ENCODE measurements at regions of chr16 and their contacts with region 1.

Region 1: GRCh38 chr16:75110637-75111513 is 5.7 kb downstream of the LDHD start:
- DNase-seq: peak; percentile 88 to 94 (median 91)
- ATAC-seq: peak; percentile 39 to 65 (median 58)
- H3K4me3 ChIP-seq: peak overlapping the region in 9 of 12 donors; percentile 11 to 43 (median 34)
- H3K27ac ChIP-seq: peak overlapping the region in 11 of 12 donors; percentile 77 to 98 (median 91)
- H3K4me1 ChIP-seq: peaks cover 6 to 92% (median 56%) of the 10 kb centered on the region in 12 donors
- H3K27me3 ChIP-seq: peaks cover 0 to 8% (median 0%) of the 10 kb centered on the region in 9 donors
- CTCF ChIP-seq: peak; percentile 85 to 97 (median 93)
- POLR2A ChIP-seq: no peak

Region 2: GRCh38 chr16:74718741-74719610 is 391.9 kb before region 1 on chr16:
- intact Hi-C with region 1: loop called in 1 of 10 experiments (anchors 10 kb)
- DNase-seq: no peak
- ATAC-seq: no peak
- H3K4me3 ChIP-seq: no peak overlapping the region
- H3K27ac ChIP-seq: no peak overlapping the region
- H3K4me1 ChIP-seq: no peaks in the 10 kb centered on the region
- H3K27me3 ChIP-seq: no peaks in the 10 kb centered on the region
- CTCF ChIP-seq: no peak
- POLR2A ChIP-seq: no peak

Region 3: GRCh38 chr16:74888208-74888852 is 222.5 kb before region 1 on chr16:
- intact Hi-C with region 1: loop called in 1 of 10 experiments (anchors 10 kb)
- DNase-seq: no peak
- ATAC-seq: no peak
- H3K4me3 ChIP-seq: no peak overlapping the region
- H3K27ac ChIP-seq: no peak overlapping the region
- H3K4me1 ChIP-seq: no peaks in the 10 kb centered on the region
- H3K27me3 ChIP-seq: no peaks in the 10 kb centered on the region
- CTCF ChIP-seq: no peak
- POLR2A ChIP-seq: no peak

Region 4: DNA sequence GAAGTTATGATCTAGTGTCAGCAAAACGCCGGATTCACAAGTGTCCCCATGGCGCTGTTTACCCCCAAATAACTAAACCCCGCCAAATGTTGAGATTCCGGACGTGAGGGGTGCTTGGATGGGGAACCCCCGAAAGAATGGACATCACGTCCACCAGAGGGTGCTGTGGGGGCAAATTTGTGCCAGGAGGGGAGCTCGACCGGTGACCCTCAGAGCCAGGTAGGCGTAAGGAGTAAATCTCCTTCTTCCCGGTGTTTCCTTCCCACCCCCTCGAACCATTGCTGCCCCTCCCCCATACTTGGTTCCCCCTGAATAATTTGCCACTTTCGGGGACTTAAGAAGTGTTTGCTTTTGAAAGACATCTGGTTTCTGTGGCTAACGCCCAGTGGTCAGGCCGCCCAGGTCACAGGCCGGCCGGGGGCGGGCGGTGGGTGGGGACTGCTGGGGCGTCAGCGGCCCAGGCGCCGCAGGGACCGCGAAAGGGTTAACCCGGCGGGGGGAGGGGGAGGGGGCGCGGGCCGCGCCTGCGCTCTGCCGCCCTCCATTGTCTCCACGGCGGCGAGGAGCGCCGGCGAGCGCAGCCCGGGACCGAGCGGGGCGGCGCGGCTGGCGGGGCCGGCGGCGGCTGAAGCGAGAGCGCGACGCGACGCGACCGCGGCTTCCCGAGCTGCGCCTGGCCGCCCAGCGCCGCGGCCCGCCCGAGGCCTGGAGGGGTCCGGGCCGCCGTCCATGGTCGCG is 112.2 kb before region 1 on chr16 and contains the start of gene ZNRF1:
- intact Hi-C with region 1: loop called (anchors 1 to 2 kb)
- DNase-seq: peak; percentile 87 to 94 (median 89)
- ATAC-seq: peak; percentile 74 to 89 (median 87)
- H3K4me3 ChIP-seq: peak within 1 kb of the TSS; percentile 65 to 99 (median 94)
- H3K27ac ChIP-seq: peak within 1 kb of the TSS; percentile 16 to 93 (median 88)
- H3K4me1 ChIP-seq: peaks cover 3 to 49% (median 33%) of the 10 kb centered on the region in 12 donors
- H3K27me3 ChIP-seq: no peaks in the 10 kb centered on the region
- CTCF ChIP-seq: peak; percentile 63 to 87 (median 82)
- POLR2A ChIP-seq: no peak
- total RNA-seq, gene ZNRF1: 20.5 to 43.3 (median 23.9) TPM

Region 5: GRCh38 chr16:75064403-75065148 is 46.3 kb before region 1 on chr16:
- intact Hi-C with region 1: loop called in 1 of 10 experiments (anchors 5 kb)
- DNase-seq: no peak
- ATAC-seq: no peak
- H3K4me3 ChIP-seq: peak overlapping the region in 1 of 12 donors; percentile 23
- H3K27ac ChIP-seq: peak overlapping the region in 2 of 12 donors; percentile 11 to 15
- H3K4me1 ChIP-seq: peaks cover 0 to 51% (median 24%) of the 10 kb centered on the region in 12 donors
- H3K27me3 ChIP-seq: no peaks in the 10 kb centered on the region
- CTCF ChIP-seq: no peak
- POLR2A ChIP-seq: no peak

Region 6: GRCh38 chr16:75148311-75149195 is 37.7 kb after region 1 on chr16 and contains the start of gene ZFP1:
- intact Hi-C with region 1: loop called in 1 of 10 experiments (anchors 2 kb)
- DNase-seq: peak; percentile 96 to 98 (median 96)
- ATAC-seq: peak; percentile 98 to 99 (median 98)
- H3K4me3 ChIP-seq: peak within 1 kb of the TSS; percentile 75 to 100 (median 88)
- H3K27ac ChIP-seq: peak within 1 kb of the TSS; percentile 83 to 100 (median 98)
- H3K4me1 ChIP-seq: peaks cover 0 to 11% (median 5%) of the 10 kb centered on the region in 12 donors
- H3K27me3 ChIP-seq: no peaks in the 10 kb centered on the region
- CTCF ChIP-seq: peak in 1 of 12 donors; percentile 21
- POLR2A ChIP-seq: peak in 1 of 2 donors; percentile 61
- total RNA-seq, gene ZFP1: 3.8 to 10.7 (median 6.2) TPM

Measured in heart left ventricle (tissue), 16 donors.